Vagina (tissue), 2 donors: ENCODE measurements at regions of chr1 and their contacts with region 1.

Region 1: GRCh38 chr1:160935527-160936258 is 18.9 kb downstream of the ITLN2 start:
- DNase-seq: no peak
- H3K4me3 ChIP-seq: no peak overlapping the region
- H3K27ac ChIP-seq: no peak overlapping the region
- H3K4me1 ChIP-seq: no peaks in the 10 kb centered on the region
- H3K27me3 ChIP-seq: no peaks in the 10 kb centered on the region
- CTCF ChIP-seq: no peak
- POLR2A ChIP-seq: no peak

Region 2: DNA sequence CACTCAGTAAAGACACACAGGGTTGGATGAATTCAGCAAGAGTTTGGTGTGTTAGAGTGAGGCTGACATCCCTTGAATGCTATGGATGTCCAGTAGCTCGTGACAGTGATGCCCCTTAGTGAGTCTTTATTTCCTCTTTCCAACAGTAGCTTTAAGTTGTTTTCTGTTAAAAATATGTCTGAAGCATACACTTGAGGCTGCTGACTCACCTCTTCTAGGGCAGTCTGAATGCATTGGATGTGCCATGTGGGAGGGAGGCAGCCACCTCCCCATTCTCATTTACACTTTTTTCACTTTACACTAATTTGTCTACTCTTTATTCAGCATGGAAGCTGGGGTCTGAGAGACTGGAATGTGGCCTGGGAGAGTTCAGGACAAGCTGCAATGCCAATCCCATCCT is 1151.4 kb after region 1 on chr1:
- intact Hi-C with region 1: loop called (anchors 5 kb)
- DNase-seq: no peak
- H3K4me3 ChIP-seq: no peak overlapping the region
- H3K27ac ChIP-seq: no peak overlapping the region
- H3K4me1 ChIP-seq: no peaks in the 10 kb centered on the region
- H3K27me3 ChIP-seq: no peaks in the 10 kb centered on the region
- CTCF ChIP-seq: no peak
- POLR2A ChIP-seq: no peak